A673 (cell line): ENCODE measurements at regions of chr20 and their contacts with region 1.

Region 1: GRCh38 chr20:48999890-49000870 is 45.9 kb upstream of the CSE1L start:
- DNase-seq: no peak
- H3K4me3 ChIP-seq: no peak overlapping the region
- H3K27ac ChIP-seq: no peak overlapping the region
- H3K4me1 ChIP-seq: no peaks in the 10 kb centered on the region
- H3K27me3 ChIP-seq: no peaks in the 10 kb centered on the region
- CTCF ChIP-seq: no peak

Region 2: GRCh38 chr20:48986899-48987298 is 13.3 kb before region 1 on chr20:
- CTCF ChIA-PET with region 1: interaction called, 14 read pairs
- POLR2A ChIA-PET with region 1: no interaction called
- intact Hi-C with region 1: no loop called
- DNase-seq: peak; percentile 37
- H3K4me3 ChIP-seq: no peak overlapping the region
- H3K27ac ChIP-seq: peak overlapping the region; percentile 8
- H3K4me1 ChIP-seq: no peaks in the 10 kb centered on the region
- H3K27me3 ChIP-seq: no peaks in the 10 kb centered on the region
- CTCF ChIP-seq: peak; percentile 63